ENCODE measurements at regions of chr5 and their contacts with region 1.

Region 1: DNA sequence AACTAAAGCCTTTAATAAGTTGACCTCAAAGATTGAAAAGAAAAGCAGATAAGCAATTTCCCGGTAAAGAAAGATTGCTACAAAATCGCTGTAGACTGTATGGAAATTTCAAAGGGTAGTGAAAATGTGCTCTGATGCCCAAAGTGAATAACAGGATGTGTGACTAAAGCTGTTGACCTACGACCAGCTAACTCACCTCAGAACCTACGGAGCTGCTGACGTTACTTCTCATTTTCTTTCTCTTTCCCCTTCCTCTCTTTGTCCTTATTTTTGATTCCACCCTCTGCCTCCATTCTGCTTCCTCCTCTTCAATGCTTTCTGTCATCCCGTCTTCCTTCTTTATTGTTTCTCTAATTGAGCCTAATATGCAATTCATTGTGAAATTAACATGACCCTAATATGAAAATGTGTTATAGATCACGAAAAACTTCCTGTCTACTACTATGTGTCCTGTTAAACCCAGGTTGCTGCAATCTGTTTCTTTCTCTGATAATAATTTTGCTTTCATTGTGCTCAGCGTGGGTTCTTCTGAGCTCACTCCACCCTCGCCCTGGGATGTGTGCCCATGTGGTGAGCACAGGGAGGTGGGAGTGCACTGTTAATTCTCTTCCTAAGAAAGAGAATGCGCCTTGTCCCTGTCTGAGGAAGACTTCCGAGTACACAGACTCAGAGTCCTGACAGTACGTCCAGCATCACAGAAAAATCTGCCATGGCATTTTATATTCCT is 103.0 kb downstream of the PDE4D start:
- DNase-seq: peak; percentile 92
- H3K4me3 ChIP-seq: peak overlapping the region in 2 of 3 experiments; percentile 6 to 44
- H3K27ac ChIP-seq: peak overlapping the region; percentile 94
- H3K4me1 ChIP-seq: peaks cover 34% of the 10 kb centered on the region
- H3K27me3 ChIP-seq: no peaks in the 10 kb centered on the region
- CTCF ChIP-seq: no peak
- POLR2A ChIP-seq: peak; percentile 76

Region 2: GRCh38 chr5:59760798-59761348 is 29.7 kb before region 1 on chr5:
- CTCF ChIA-PET with region 1: interaction called, 3 read pairs
- POLR2A ChIA-PET with region 1: no interaction called
- dilution Hi-C with region 1: no loop called
- intact Hi-C with region 1: loop called (anchors 1 kb)
- DNase-seq: peak; percentile 88
- H3K4me3 ChIP-seq: peak overlapping the region in 1 of 3 experiments; percentile 48
- H3K27ac ChIP-seq: peak overlapping the region; percentile 98
- H3K4me1 ChIP-seq: peaks cover 62% of the 10 kb centered on the region
- H3K27me3 ChIP-seq: no peaks in the 10 kb centered on the region
- CTCF ChIP-seq: no peak
- POLR2A ChIP-seq: no peak

Region 3: DNA sequence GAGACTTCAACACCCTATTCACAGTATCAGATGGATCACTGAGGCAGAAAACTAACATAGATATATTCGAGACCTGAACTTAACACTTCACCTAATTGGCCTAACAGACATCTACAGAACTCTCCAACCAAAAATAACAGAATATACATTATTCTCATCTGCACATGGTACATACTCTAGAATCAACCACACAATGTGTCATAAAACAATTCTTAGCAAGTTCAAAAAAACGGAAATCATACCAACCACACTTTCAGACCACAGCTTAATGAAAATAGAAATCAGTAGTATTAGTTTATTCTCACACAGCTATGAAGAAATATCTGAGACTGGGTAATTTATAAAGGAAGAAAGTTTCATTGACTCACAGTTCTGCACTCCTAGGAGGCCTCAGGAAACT is 521.5 kb after region 1 on chr5:
- CTCF ChIA-PET with region 1: no interaction called
- POLR2A ChIA-PET with region 1: no interaction called
- dilution Hi-C with region 1: no loop called
- intact Hi-C with region 1: no loop called
- DNase-seq: no peak
- H3K4me3 ChIP-seq: no peak overlapping the region
- H3K27ac ChIP-seq: no peak overlapping the region
- H3K4me1 ChIP-seq: no peaks in the 10 kb centered on the region
- H3K27me3 ChIP-seq: no peaks in the 10 kb centered on the region
- CTCF ChIP-seq: no peak
- POLR2A ChIP-seq: no peak